AG04450 (cell line): ENCODE measurements at regions of chr3 and their contacts with region 1.

Region 1: GRCh38 chr3:197906023-197906849 is 43.8 kb upstream of the RPL35A start:
- DNase-seq: peak; percentile 93
- H3K4me3 ChIP-seq: no peak overlapping the region
- H3K27ac ChIP-seq: peak overlapping the region; percentile 0
- H3K27me3 ChIP-seq: no peaks in the 10 kb centered on the region
- CTCF ChIP-seq: peak; percentile 95

Region 2: DNA sequence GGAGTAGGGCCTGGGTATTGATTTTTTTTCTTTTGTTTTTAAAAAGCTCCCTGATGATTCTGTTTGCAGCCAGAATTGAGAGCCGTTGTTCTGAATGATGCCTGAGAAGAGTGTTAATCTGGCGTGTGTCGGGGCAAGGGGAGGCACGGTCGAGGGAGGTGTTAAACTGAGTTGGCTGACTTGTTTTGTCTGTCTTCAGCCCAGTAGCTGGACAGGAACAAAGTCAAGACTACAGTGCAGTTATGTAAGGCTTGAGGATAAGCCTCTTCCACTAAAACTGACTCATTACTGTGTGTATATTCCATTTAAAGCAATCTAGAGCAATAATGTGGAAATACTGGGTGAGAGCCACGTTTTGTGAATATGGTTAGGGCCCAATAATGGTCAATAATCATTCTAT is 488.8 kb before region 1 on chr3:
- CTCF ChIA-PET with region 1: no interaction called
- POLR2A ChIA-PET with region 1: no interaction called
- DNase-seq: no peak
- H3K4me3 ChIP-seq: no peak overlapping the region
- H3K27ac ChIP-seq: no peak overlapping the region
- H3K27me3 ChIP-seq: peaks cover 24% of the 10 kb centered on the region
- CTCF ChIP-seq: no peak

Region 3: GRCh38 chr3:197577366-197578074 is 328.7 kb before region 1 on chr3:
- CTCF ChIA-PET with region 1: no interaction called
- POLR2A ChIA-PET with region 1: no interaction called
- DNase-seq: no peak
- H3K4me3 ChIP-seq: no peak overlapping the region
- H3K27ac ChIP-seq: no peak overlapping the region
- H3K27me3 ChIP-seq: peaks cover 23% of the 10 kb centered on the region
- CTCF ChIP-seq: no peak

Region 4: GRCh38 chr3:197889204-197889930 is 16.9 kb before region 1 on chr3:
- CTCF ChIA-PET with region 1: interaction called, 20 read pairs
- POLR2A ChIA-PET with region 1: no interaction called
- DNase-seq: no peak
- H3K4me3 ChIP-seq: no peak overlapping the region
- H3K27ac ChIP-seq: no peak overlapping the region
- H3K27me3 ChIP-seq: no peaks in the 10 kb centered on the region
- CTCF ChIP-seq: no peak

Region 5: DNA sequence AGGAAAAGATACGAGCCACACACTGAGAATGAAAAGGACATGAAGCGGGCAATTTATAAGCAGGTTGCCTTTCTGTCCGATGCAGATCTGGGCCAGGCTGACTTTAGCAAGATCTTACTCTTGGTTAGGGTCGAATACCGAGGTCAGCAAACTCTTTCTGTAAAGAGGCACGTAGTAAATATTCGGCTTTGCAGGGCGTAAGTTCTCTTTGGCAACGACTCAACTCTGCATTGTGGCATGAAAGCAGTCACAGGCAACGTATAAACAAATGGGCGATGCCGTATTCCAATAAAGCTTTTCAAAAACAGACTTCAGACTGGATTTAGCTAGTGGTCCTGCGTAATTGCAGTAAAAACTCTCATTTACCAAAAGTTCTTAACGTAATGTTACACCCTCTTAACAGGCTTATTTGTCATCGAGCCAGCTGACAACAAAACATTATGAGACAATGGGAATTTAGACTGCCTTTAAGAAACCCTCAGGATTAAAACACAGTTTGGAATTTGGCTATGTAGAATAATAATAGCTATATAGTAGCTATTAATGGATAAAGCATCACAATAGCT is 30.7 kb after region 1 on chr3:
- CTCF ChIA-PET with region 1: interaction called, 90 read pairs
- POLR2A ChIA-PET with region 1: no interaction called
- DNase-seq: no peak
- H3K4me3 ChIP-seq: no peak overlapping the region
- H3K27ac ChIP-seq: no peak overlapping the region
- H3K27me3 ChIP-seq: no peaks in the 10 kb centered on the region
- CTCF ChIP-seq: no peak

Region 6: DNA sequence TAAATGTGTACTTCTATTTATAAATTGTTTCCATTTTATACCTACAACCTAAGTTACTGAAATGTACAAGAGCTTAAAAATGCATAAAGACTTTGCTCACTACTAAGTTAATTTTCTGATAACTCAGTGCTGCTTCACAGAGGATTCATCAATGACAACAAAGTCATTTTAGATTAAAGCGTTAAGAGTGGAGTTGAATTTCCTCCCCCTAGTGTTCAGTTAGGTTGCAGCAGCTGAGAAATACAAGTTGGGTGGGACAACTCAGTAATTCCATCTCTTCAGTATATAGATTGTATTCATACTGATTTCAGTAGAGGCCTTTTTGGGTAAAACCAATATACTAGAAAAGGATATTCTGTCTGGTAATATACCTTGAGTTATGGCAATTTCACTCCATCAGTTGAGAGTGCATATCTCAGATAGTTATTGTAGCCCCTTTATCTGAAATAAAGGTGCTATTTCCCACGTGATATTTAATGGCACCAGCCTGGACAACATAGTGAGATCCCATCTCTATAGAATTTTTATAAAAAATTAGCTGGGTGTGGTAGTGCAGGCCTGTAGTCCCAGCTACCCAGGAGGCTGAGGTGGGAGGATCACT is 36.8 kb after region 1 on chr3:
- CTCF ChIA-PET with region 1: interaction called, 90 read pairs
- POLR2A ChIA-PET with region 1: no interaction called
- DNase-seq: no peak
- H3K4me3 ChIP-seq: no peak overlapping the region
- H3K27ac ChIP-seq: no peak overlapping the region
- H3K27me3 ChIP-seq: no peaks in the 10 kb centered on the region
- CTCF ChIP-seq: peak; percentile 91

Region 7: GRCh38 chr3:198080521-198081280 is 174.5 kb after region 1 on chr3:
- CTCF ChIA-PET with region 1: interaction called, 11 read pairs
- POLR2A ChIA-PET with region 1: no interaction called
- DNase-seq: peak; percentile 13
- H3K4me3 ChIP-seq: peak overlapping the region; percentile 55
- H3K27ac ChIP-seq: no peak overlapping the region
- H3K27me3 ChIP-seq: peaks cover 42% of the 10 kb centered on the region
- CTCF ChIP-seq: peak; percentile 52